Ovary (tissue), 10 donors: ENCODE measurements at regions of chr4 and their contacts with region 1.

Region 1: DNA sequence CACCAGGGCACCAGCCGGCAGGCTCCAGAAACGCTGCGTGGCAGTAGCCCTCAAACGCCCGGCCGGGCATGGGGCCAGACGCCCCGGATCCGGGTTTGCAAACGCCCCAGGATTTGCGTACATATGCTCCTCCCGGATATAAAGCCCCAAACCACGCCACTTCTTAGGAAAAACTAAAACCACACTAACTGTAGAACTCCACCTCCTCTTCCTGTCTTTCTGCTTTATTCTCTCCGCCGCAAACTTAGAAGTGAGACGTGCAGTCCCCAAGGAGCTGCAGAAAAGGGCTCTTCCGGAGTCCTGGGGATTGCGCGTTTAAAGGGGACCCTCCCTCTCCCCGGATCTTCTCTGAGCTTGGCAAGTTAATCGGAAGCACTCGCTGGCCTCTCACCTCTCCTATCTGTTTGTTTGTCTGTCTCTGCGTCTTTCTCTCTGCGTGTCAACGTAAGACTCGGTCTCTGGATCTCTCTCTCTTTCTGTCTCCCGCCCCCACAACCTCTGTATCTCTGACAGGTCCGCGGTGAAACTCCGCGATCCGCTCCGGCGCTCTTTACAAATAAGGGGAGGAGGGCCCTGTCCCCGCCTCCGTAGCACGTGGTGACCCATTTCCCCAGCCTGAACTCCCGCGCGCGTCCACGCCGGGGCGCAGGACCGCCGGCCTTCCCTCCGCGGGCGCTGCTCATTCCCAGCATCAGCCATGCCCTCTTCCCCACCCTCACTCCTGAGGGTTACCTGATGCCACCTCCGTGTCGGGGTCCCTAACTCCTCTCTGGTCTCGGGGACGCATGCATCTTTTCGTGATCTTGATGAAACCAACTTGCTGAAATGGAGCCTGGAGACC is at the start of gene SLC39A8:
- DNase-seq: peak; percentile 83 to 89 (median 87)
- H3K4me3 ChIP-seq: peak within 1 kb of the TSS; percentile 70
- H3K27ac ChIP-seq: peak within 1 kb of the TSS; percentile 55 to 78
- H3K4me1 ChIP-seq: peaks cover 2% of the 10 kb centered on the region
- H3K27me3 ChIP-seq: no peaks in the 10 kb centered on the region
- CTCF ChIP-seq: peak; percentile 75 to 82 (median 80)
- EP300 ChIP-seq: no peak
- POLR2A ChIP-seq: peak; percentile 70
- total RNA-seq, gene SLC39A8: 15.6 to 28.7 (median 22.0) TPM

Region 2: GRCh38 chr4:102430461-102430910 is 85.3 kb after region 1 on chr4:
- intact Hi-C with region 1: loop called in 1 of 4 experiments (anchors 2 kb)
- DNase-seq: no peak
- H3K4me3 ChIP-seq: peak overlapping the region; percentile 40
- H3K27ac ChIP-seq: peak overlapping the region in 1 of 2 donors; percentile 59
- H3K4me1 ChIP-seq: no peaks in the 10 kb centered on the region
- H3K27me3 ChIP-seq: no peaks in the 10 kb centered on the region
- CTCF ChIP-seq: no peak
- EP300 ChIP-seq: no peak
- POLR2A ChIP-seq: no peak